Activated CD4-positive, alpha-beta T cell treated with anti-CD3 and anti-CD28 coated beads, Interleukin-2, amount 10 ng/mL, durations not matched to agents 24 days and 14 days (primary cell): ENCODE measurements at regions of chr9 and their contacts with region 1.

Region 1: DNA sequence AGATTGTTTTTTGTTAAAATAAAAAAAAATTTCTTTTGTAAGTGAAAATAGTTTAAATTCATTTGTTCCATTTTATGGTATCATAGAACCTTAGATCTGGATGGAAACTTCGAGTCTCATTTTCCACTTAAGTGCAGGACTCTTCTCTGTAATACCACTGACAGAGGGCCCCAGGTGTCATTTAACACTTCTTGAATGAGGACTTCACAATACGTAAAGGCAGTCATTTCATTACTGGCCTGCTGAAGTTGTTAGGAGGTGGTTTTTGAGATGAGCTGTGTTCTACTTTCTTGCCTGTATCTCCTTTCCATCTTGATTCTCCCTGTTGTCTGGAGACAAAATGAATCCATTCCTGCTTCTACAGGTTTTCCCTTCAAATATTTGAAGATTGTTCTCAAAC is 455.3 kb downstream of the DMRT2 start:
- DNase-seq: no peak
- H3K4me3 Mint-ChIP-seq: no peak overlapping the region
- H3K27ac Mint-ChIP-seq: peak overlapping the region; percentile 61
- H3K4me1 Mint-ChIP-seq: no peaks in the 10 kb centered on the region
- H3K27me3 Mint-ChIP-seq: no peaks in the 10 kb centered on the region

Region 2: GRCh38 chr9:1490341-1491232 is 14.9 kb before region 1 on chr9:
- intact Hi-C with region 1: loop called (anchors 1 kb)
- DNase-seq: no peak
- H3K4me3 Mint-ChIP-seq: no peak overlapping the region
- H3K27ac Mint-ChIP-seq: peak overlapping the region; percentile 84
- H3K4me1 Mint-ChIP-seq: peaks cover 4% of the 10 kb centered on the region
- H3K27me3 Mint-ChIP-seq: no peaks in the 10 kb centered on the region